HEK293 (cell line): ENCODE measurements at regions of chr17 and their contacts with region 1.

Region 1: GRCh38 chr17:75109407-75110233 is at the start of gene ARMC7:
- H3K4me3 ChIP-seq: peak within 1 kb of the TSS; percentile 75
- H3K27ac ChIP-seq: peak within 1 kb of the TSS; percentile 67; the same call in 1 of the 2 replicates
- H3K4me1 ChIP-seq: peaks cover 17% of the 10 kb centered on the region
- CTCF ChIP-seq: peak; percentile 10; the same call in 1 of the 2 replicates

Region 2: GRCh38 chr17:75034236-75034908 is 75.2 kb before region 1 on chr17:
- CTCF ChIA-PET with region 1: interaction called, 14 read pairs
- POLR2A ChIA-PET with region 1: interaction called, 7 read pairs
- H3K4me3 ChIP-seq: peak overlapping the region; percentile 60
- H3K27ac ChIP-seq: peak overlapping the region; percentile 94
- H3K4me1 ChIP-seq: peaks cover 19% of the 10 kb centered on the region
- CTCF ChIP-seq: peak; percentile 51

Region 3: GRCh38 chr17:75084039-75084660 is 25.5 kb before region 1 on chr17:
- CTCF ChIA-PET with region 1: interaction called, 11 read pairs
- POLR2A ChIA-PET with region 1: interaction called, 5 read pairs
- H3K4me3 ChIP-seq: no peak overlapping the region
- H3K27ac ChIP-seq: no peak overlapping the region
- H3K4me1 ChIP-seq: no peaks in the 10 kb centered on the region; the same call in 1 of the 2 replicates
- CTCF ChIP-seq: no peak

Region 4: GRCh38 chr17:75147878-75148546 is 38.4 kb after region 1 on chr17:
- CTCF ChIA-PET with region 1: interaction called, 18 read pairs
- POLR2A ChIA-PET with region 1: interaction called, 3 read pairs
- H3K4me3 ChIP-seq: no peak overlapping the region
- H3K27ac ChIP-seq: no peak overlapping the region
- H3K4me1 ChIP-seq: peaks cover 4% of the 10 kb centered on the region; the same call in 1 of the 2 replicates
- CTCF ChIP-seq: no peak

Region 5: GRCh38 chr17:75199886-75200618 is 90.4 kb after region 1 on chr17:
- CTCF ChIA-PET with region 1: interaction called, 149 read pairs
- POLR2A ChIA-PET with region 1: interaction called, 12 read pairs
- H3K4me3 ChIP-seq: no peak overlapping the region
- H3K27ac ChIP-seq: no peak overlapping the region
- H3K4me1 ChIP-seq: no peaks in the 10 kb centered on the region
- CTCF ChIP-seq: no peak